ENCODE measurements at regions of chr2 and their contacts with region 1.

Region 1: GRCh38 chr2:86079981-86080911 is 25.4 kb downstream of the POLR1A start:
- DNase-seq: peak; percentile 91

Region 2: DNA sequence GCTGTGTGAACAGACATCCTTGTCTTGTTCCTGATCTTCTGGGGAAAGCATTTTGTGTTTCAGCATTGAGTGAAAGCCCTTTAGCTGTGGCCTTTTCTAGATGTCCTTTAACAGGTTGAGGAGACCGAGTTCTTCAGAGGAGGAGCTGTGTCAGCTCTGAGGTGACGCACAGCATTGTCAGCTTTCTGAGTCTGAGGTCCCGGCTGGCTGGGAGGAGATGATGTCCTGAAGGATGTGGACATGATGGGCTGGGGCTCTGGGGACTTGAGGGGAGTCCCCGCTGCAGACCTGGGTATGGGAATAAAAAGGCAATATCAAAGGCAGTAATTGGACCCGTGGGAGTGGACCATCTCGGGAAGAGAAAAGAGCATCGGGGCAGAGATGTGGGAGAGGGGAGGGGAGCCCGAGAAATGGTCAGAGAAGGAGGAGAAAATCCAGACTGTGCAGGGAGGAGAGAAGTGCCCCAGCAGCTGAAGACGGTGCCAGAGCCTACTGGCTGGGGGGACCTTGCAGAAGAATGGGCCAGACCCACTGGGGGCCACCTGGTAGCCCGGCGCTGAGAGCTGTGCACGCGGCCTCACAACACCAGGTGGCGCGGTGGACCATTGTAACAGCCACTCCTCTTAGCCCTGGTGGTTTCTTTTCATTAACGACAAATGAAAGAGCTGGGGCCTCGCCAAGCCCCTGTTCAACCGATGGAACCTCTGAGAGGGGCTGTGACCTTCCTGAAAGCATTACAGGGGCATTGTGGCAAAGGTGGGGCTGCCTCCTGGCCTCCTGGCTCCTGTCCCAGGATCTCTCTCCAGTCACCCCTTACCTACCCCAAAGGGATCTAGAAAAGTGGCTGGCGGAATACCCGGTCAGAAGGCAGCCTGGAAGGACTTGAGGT is 253.0 kb before region 1 on chr2:
- intact Hi-C with region 1: loop called (anchors 1 kb)
- DNase-seq: peak; percentile 79

Region 3: DNA sequence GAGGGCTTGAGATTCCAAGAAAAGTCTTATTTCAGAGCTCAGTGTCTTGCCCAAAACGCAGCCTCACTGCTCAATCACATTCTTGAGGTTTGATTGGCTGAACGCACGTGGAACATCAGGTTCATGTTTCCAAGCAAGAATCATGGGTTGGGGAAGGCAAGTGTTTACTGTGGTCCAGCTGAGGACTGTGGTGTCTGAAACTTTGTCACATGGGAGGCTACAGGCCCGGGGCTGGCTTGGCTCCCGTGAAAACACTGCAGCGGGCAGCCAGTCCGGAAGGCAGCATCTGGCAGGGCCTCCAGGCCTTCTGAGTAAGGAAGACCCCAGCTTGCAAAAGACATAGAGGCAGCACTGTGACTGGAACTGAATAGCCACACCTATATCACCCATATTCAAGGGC is 59.3 kb before region 1 on chr2:
- intact Hi-C with region 1: loop called (anchors 10 kb)
- DNase-seq: no peak

Region 4: GRCh38 chr2:86054535-86055082 is 25.6 kb before region 1 on chr2:
- intact Hi-C with region 1: no loop called
- DNase-seq: peak; percentile 44

Measured in cardiac septum (tissue), 1 donor.